Activated CD8-positive, alpha-beta memory T cell treated with anti-CD3 and anti-CD28 coated beads, Interleukin-2, amount 10 ng/mL, durations not matched to agents 7 days and 5 days (primary cell): ENCODE measurements at regions of chr1 and their contacts with region 1.

Region 1: DNA sequence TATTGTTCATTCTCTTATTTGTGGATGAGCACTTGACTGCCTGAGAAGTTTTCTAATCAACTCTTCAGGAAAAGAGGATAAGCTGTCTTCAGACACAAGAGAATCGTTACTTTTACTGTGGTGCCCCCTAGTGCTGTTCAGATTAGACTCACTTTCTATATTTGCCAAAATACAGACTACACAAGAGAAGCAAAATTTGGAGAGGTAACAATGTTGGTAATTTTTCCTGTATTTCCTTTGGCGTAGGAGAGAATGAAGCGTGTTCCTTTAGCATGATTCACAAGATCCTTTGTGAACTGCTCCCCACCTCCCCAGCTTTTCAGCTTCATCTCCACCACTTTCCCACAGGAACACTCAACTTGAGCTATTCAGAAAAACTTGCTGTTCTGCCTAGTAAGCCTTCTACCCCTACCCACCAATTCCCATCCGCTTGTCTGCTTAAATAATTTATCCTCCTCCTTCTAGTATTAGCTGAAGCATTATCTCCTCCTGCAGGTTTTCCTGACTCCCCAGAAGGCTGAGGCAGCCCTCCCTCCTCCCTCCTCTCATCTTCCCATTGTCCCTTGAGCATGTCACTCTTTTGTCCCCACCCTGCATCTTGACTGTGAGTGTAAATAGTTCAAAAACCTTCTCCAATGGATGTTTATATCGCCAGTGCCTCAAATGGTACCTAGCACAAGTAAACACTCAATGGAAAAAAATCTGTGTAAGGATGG is 4.5 kb downstream of the TNFSF4 start:
- DNase-seq: no peak
- ATAC-seq: no peak
- H3K4me3 Mint-ChIP-seq: no peak overlapping the region
- H3K27ac Mint-ChIP-seq: no peak overlapping the region
- H3K4me1 Mint-ChIP-seq: peaks cover 35% of the 10 kb centered on the region
- H3K27me3 Mint-ChIP-seq: peaks cover 43% of the 10 kb centered on the region

Region 2: DNA sequence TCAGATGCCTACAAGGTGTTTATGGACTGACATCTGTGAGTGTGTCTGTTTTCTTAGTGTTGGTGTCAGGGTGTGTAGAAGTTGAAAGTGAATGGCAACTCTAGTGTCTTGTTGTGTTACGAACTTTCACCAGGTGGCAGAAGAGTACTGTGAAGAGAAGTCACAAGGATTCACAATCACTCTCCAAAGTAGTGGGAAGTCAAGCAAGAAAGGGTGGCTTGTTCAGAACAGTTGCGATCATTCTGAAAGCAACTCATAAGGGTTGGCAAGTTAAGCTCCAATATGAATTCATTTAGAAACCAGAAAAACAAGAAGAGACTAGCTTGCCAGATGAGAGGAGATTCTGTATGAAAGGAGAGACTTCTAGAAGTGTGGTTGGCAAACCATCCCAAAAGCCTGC is 457.6 kb before region 1 on chr1:
- CTCF ChIA-PET with region 1: interaction called, 99 read pairs
- DNase-seq: peak; percentile 56
- ATAC-seq: peak; percentile 69
- H3K4me3 Mint-ChIP-seq: no peak overlapping the region
- H3K27ac Mint-ChIP-seq: no peak overlapping the region
- H3K4me1 Mint-ChIP-seq: peaks cover 28% of the 10 kb centered on the region
- H3K27me3 Mint-ChIP-seq: peaks cover 53% of the 10 kb centered on the region

Region 3: GRCh38 chr1:172778456-172779455 is 423.8 kb before region 1 on chr1:
- CTCF ChIA-PET with region 1: interaction called, 13 read pairs
- DNase-seq: no peak
- ATAC-seq: peak; percentile 82
- H3K4me3 Mint-ChIP-seq: peak overlapping the region; percentile 27
- H3K27ac Mint-ChIP-seq: peak overlapping the region; percentile 25
- H3K4me1 Mint-ChIP-seq: peaks cover 25% of the 10 kb centered on the region
- H3K27me3 Mint-ChIP-seq: peaks cover 21% of the 10 kb centered on the region

Region 4: DNA sequence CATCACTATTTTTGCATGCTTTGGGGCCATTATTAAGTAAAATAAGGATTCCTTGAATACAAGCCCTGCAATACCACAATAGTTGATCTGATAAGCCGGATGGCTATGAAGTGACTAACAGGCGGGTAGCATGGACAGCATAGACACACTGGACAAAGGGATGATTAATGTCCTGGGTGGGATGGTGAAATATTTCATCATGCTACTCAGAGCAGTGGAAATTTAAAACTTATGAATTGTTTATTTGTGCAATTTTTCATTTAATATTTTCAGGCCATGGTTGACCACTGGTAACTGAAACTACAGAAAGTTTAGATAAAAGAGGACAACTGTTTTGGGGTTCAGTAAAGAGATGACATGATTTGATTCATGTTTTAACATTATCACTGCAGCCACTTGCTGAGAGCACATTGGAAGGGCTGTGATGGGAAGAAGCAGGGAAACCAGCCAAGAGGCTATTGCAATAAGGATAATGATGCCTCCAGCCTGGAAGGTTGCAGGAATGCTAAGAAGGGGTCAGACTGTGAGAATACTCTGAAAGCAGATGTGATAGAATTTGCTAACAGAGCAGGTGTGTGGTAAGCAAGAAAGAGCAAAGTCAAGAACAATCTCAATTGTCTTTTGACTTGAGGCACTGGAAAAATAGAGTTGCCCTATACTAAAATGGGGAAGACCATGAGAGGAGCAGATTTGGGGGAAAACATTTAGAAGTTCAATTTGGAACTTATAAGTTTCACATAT is 67.1 kb after region 1 on chr1:
- CTCF ChIA-PET with region 1: no interaction called
- DNase-seq: no peak
- ATAC-seq: no peak
- H3K4me3 Mint-ChIP-seq: no peak overlapping the region
- H3K27ac Mint-ChIP-seq: no peak overlapping the region
- H3K4me1 Mint-ChIP-seq: no peaks in the 10 kb centered on the region
- H3K27me3 Mint-ChIP-seq: no peaks in the 10 kb centered on the region